CD8-positive, alpha-beta T cell (primary cell): ENCODE measurements at regions of chr6 and their contacts with region 1.

Region 1: DNA sequence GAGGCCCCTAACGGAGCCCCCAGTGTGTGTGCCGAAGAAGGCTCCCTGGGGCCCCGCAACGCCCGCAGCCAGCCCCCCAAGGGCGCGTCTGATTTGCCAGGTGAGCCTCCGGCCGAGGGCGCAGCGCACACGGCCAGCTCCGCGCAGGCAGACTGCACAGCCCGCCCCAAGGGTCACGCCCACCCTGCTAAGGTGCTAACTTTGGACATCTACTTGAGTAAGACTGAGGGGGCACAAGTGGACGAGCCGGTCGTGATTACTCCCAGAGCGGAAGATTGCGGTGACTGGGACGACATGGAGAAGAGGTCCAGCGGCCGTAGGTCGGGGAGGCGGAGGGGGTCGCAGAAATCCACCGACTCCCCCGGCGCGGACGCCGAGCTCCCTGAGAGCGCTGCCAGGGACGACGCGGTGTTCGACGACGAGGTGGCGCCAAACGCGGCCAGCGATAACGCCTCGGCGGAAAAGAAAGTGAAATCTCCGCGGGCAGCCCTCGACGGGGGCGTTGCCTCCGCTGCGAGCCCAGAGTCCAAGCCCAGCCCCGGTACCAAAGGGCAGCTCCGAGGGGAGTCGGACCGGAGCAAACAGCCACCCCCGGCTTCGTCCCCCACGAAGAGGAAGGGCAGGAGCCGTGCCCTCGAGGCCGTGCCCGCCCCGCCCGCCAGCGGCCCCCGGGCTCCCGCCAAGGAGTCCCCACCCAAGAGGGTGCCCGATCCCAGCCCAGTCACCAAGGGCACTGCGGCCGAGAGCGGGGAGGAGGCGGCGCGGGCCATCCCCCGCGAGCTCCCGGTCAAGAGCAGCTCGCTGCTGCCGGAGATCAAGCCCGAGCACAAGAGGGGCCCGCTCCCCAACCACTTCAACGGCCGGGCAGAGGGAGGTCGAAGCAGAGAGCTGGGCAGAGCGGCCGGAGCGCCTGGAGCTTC is 117.0 kb downstream of the RTN4IP1 start:
- DNase-seq: peak; percentile 55 to 91 (median 80)
- ATAC-seq: peak; percentile 61
- H3K4me3 ChIP-seq: peak overlapping the region; percentile 82 to 84
- H3K4me3 Mint-ChIP-seq: peak overlapping the region; percentile 97
- H3K27ac ChIP-seq: peak overlapping the region; percentile 85
- H3K27ac Mint-ChIP-seq: peak overlapping the region; percentile 96
- H3K4me1 ChIP-seq: peaks cover 58% of the 10 kb centered on the region
- H3K4me1 Mint-ChIP-seq: peaks cover 55% of the 10 kb centered on the region
- H3K27me3 ChIP-seq: no peaks in the 10 kb centered on the region
- H3K27me3 Mint-ChIP-seq: no peaks in the 10 kb centered on the region
- CTCF ChIP-seq: peak; percentile 59

Region 2: DNA sequence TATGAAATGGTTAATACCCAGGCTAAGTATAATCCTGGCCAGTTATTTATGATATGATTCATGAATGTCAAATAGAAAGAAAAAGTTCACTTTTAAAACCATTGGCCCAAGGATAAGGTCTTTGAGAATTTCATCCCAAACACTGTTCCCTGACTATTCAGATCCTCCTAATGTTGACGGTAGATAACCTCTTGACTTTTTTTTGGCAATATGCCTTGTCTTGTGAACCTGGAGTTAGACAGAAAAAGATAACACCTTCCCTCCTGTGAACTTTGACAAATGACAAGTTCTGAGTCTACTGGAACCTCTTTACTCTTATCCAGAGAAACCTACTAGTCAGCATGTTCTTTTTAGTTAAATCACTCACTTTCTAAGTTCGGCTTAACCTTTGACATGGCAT is 942.6 kb before region 1 on chr6:
- CTCF ChIA-PET with region 1: no interaction called
- POLR2A ChIA-PET with region 1: no interaction called
- intact Hi-C with region 1: no loop called
- DNase-seq: no peak
- ATAC-seq: no peak
- H3K4me3 ChIP-seq: no peak overlapping the region
- H3K4me3 Mint-ChIP-seq: no peak overlapping the region
- H3K27ac ChIP-seq: no peak overlapping the region
- H3K27ac Mint-ChIP-seq: no peak overlapping the region
- H3K4me1 ChIP-seq: no peaks in the 10 kb centered on the region
- H3K4me1 Mint-ChIP-seq: no peaks in the 10 kb centered on the region
- H3K27me3 ChIP-seq: no peaks in the 10 kb centered on the region
- H3K27me3 Mint-ChIP-seq: no peaks in the 10 kb centered on the region
- CTCF ChIP-seq: no peak

Region 3: GRCh38 chr6:106325336-106326178 is 186.8 kb before region 1 on chr6 and contains the start of gene ATG5:
- CTCF ChIA-PET with region 1: interaction called, 3 read pairs
- POLR2A ChIA-PET with region 1: interaction called, 3 read pairs
- intact Hi-C with region 1: loop called in 1 of 2 experiments (anchors 1 kb)
- DNase-seq: peak; percentile 99 to 100 (median 100)
- ATAC-seq: peak; percentile 91
- H3K4me3 ChIP-seq: peak within 1 kb of the TSS; percentile 94 to 96
- H3K4me3 Mint-ChIP-seq: peak within 1 kb of the TSS; percentile 99
- H3K27ac ChIP-seq: peak within 1 kb of the TSS; percentile 90
- H3K27ac Mint-ChIP-seq: peak within 1 kb of the TSS; percentile 96
- H3K4me1 ChIP-seq: peaks cover 28% of the 10 kb centered on the region
- H3K4me1 Mint-ChIP-seq: peaks cover 47% of the 10 kb centered on the region
- H3K27me3 ChIP-seq: no peaks in the 10 kb centered on the region
- H3K27me3 Mint-ChIP-seq: peaks cover 12% of the 10 kb centered on the region
- CTCF ChIP-seq: no peak
- total RNA-seq, gene ATG5: 28.7 to 28.9 TPM

Region 4: GRCh38 chr6:106444777-106445507 is 67.4 kb before region 1 on chr6:
- CTCF ChIA-PET with region 1: interaction called, 15 read pairs
- POLR2A ChIA-PET with region 1: interaction called, 3 read pairs
- intact Hi-C with region 1: loop called (anchors 1 to 2 kb)
- DNase-seq: peak in 3 of 9 experiments; percentile 32 to 84 (median 77)
- ATAC-seq: peak; percentile 86
- H3K4me3 ChIP-seq: no peak overlapping the region
- H3K4me3 Mint-ChIP-seq: no peak overlapping the region
- H3K27ac ChIP-seq: no peak overlapping the region
- H3K27ac Mint-ChIP-seq: no peak overlapping the region
- H3K4me1 ChIP-seq: peaks cover 12% of the 10 kb centered on the region
- H3K4me1 Mint-ChIP-seq: peaks cover 15% of the 10 kb centered on the region
- H3K27me3 ChIP-seq: peaks cover under 1 to 3% of the 10 kb centered on the region in 2 experiments
- H3K27me3 Mint-ChIP-seq: peaks cover 12% of the 10 kb centered on the region
- CTCF ChIP-seq: peak; percentile 72

Region 5: DNA sequence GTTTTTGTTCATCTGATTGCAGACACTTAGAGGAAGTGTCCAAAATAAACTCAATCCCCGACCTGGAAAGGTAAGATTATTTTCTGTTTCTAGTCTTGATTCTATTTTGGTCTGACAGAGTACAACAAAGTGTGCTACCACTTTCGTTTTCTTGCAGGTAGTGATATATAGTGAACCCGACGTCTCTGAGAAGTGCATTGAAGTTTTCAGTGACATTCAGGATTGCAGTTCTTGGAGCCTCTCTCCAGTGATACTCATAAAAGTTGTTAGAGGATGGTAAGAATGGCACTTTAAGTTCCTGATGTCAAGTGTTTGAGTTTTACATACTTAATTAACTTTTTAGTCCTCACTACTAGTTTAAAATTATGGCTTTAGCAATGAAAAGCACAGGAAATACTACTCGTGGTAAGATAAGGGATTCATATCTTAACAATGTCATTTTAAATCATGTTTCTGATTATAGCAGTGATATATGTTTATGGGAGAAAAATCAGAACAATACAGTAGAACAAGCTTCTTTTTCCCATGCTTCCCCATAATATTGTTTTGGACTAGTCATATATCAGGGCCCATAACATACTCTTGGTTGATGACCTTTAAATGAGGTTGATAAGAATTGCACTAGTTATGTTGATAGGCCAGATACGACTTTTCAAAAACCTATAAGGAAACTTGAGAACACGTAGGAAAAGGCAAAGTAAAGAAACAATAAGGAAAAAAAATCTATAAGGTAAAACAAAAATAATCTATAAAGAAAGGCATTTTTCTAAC is 13.0 kb after region 1 on chr6:
- CTCF ChIA-PET with region 1: interaction called, 104 read pairs
- POLR2A ChIA-PET with region 1: interaction called, 135 read pairs
- intact Hi-C with region 1: loop called (anchors 1 kb)
- DNase-seq: peak in 2 of 9 experiments; percentile 53 to 73
- ATAC-seq: peak; percentile 12
- H3K4me3 ChIP-seq: peak overlapping the region; percentile 35 to 38
- H3K4me3 Mint-ChIP-seq: peak overlapping the region; percentile 86
- H3K27ac ChIP-seq: peak overlapping the region; percentile 43 to 82
- H3K27ac Mint-ChIP-seq: peak overlapping the region; percentile 93
- H3K4me1 ChIP-seq: peaks cover 22% of the 10 kb centered on the region
- H3K4me1 Mint-ChIP-seq: peaks cover 65% of the 10 kb centered on the region
- H3K27me3 ChIP-seq: no peaks in the 10 kb centered on the region
- H3K27me3 Mint-ChIP-seq: no peaks in the 10 kb centered on the region
- CTCF ChIP-seq: no peak

Region 6: DNA sequence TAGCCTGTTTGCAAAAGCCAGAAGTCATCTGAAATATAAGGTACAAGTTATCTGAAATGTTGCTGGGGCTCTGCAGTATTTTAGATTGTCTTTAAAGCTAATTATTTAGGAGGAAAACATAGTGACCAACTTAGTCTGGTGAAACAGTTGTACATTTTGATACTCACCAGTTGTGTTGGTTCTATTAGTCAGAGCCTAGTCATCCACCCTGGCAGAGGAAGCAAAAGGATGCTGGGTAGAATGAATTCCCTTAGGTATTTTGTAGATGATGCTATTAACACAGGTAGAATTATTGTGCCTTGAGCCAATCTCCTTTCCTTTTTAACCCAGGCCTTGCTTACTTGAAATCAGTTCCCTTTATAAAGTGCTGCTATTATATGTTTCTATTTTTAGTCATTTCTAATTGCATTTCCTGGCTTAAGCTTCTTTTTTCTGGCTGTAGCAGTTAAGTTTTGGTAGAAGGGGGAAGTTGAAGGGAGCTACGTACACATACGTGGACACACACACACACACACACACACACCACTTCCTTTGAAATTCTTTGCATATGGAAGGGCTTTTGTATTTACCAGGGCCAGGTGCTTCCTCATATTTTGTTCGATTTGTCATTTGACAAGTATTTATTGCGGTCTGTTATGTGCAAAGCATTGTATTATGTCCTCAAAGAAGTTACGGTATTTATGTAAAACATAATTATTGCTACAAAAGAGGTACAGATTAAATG is 34.5 kb after region 1 on chr6:
- CTCF ChIA-PET with region 1: interaction called, 115 read pairs
- POLR2A ChIA-PET with region 1: interaction called, 3 read pairs
- intact Hi-C with region 1: no loop called
- DNase-seq: no peak
- ATAC-seq: no peak
- H3K4me3 ChIP-seq: no peak overlapping the region
- H3K4me3 Mint-ChIP-seq: no peak overlapping the region
- H3K27ac ChIP-seq: peak overlapping the region in 1 of 2 experiments; percentile 12
- H3K27ac Mint-ChIP-seq: peak overlapping the region; percentile 28
- H3K4me1 ChIP-seq: no peaks in the 10 kb centered on the region
- H3K4me1 Mint-ChIP-seq: peaks cover 25% of the 10 kb centered on the region
- H3K27me3 ChIP-seq: no peaks in the 10 kb centered on the region
- H3K27me3 Mint-ChIP-seq: no peaks in the 10 kb centered on the region
- CTCF ChIP-seq: no peak

Region 7: DNA sequence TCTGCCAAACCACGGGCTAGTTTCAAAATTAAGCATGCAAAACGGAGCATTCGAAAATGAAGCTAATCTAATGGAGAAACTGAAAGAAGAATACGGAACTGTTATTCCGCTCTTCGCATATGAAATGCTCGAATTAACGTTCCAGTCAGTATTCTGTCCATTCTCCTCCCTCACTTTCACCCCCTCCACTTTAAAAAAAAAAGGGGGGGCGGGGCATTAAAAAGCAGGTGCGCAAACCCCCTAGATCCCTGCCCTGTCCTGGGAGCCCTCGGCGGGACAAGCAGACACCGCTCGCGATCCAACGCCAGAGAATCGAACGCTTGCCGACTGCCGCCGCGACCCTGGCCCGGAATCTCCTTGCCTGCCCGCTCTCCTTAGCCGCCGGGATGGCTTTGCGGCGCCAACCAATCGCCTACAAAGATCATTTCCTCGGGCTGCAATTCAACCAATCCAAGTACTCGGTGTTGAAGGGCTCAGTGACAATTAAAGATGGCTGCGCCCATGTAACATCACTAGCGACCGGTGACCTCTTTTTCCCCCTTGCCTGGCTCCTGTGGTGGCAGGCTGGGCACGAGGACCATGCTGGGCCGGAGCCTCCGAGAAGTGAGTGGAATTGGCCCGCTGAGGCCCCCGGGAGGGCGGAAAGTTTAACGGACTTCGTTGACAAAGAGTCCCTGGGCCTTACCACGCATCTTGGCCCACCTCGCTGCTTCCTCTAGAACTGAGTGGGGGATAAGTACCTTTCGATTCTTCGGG is 117.0 kb after region 1 on chr6 and contains the starts of genes QRSL1 and RTN4IP1:
- CTCF ChIA-PET with region 1: no interaction called
- POLR2A ChIA-PET with region 1: interaction called, 3 read pairs
- intact Hi-C with region 1: loop called (anchors 5 kb)
- DNase-seq: peak; percentile 70 to 95 (median 82)
- ATAC-seq: peak; percentile 90
- H3K4me3 ChIP-seq: peak within 1 kb of the TSS; percentile 86 to 93
- H3K4me3 Mint-ChIP-seq: peak within 1 kb of the TSS; percentile 99
- H3K27ac ChIP-seq: peak within 1 kb of the TSS; percentile 83 to 88
- H3K27ac Mint-ChIP-seq: peak within 1 kb of the TSS; percentile 99
- H3K4me1 ChIP-seq: peaks cover 19% of the 10 kb centered on the region
- H3K4me1 Mint-ChIP-seq: peaks cover 43% of the 10 kb centered on the region
- H3K27me3 ChIP-seq: no peaks in the 10 kb centered on the region
- H3K27me3 Mint-ChIP-seq: no peaks in the 10 kb centered on the region
- CTCF ChIP-seq: no peak
- total RNA-seq, gene QRSL1: 11.1 to 11.6 TPM
- total RNA-seq, gene RTN4IP1: 1.8 to 1.9 TPM

Region 8: DNA sequence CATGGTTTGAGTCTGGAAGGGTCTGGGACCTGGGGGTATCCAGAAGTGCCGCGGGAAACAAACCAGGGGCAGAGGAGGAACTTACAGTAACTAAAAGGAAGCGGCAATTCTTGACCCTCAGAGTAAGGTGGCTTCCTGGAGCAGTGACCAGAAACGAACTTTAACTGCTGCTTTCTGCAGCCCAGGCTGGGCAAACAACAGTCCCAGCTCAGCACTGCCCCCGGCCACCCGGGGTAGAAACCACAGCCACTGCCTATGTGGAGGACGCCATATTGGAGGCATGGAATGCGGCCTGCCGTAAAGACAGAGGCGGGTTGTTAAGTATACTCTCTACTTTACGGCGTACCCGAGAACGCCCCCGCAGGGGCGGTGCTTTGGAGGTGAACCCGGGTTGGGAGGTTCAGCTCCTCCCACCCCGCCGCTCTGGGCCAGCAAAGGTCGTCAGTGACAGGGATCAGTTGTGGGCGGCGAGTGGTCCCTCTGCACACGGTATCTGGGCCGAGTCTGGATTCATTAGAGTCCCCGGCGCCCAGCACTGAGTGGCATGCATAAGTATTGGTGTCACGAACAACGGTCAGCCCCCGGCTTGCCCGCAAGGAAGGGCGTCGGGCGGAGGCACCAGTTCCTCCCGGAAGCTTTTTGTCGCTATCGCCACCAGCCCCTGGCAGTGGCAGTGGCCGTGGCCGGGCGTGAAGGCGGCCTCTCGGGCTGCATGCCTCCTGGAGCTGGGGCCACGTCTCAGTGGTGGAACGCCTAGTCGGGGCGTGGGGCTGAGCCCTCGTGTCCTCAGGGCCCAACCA is 947.2 kb after region 1 on chr6 and contains the start of gene PDSS2:
- CTCF ChIA-PET with region 1: no interaction called
- POLR2A ChIA-PET with region 1: no interaction called
- intact Hi-C with region 1: loop called in 1 of 2 experiments (anchors 2 kb)
- DNase-seq: peak; percentile 93 to 99 (median 96)
- ATAC-seq: peak; percentile 96
- H3K4me3 ChIP-seq: peak within 1 kb of the TSS; percentile 93 to 94
- H3K4me3 Mint-ChIP-seq: peak within 1 kb of the TSS; percentile 98
- H3K27ac ChIP-seq: peak within 1 kb of the TSS; percentile 69 to 82
- H3K27ac Mint-ChIP-seq: peak within 1 kb of the TSS; percentile 98
- H3K4me1 ChIP-seq: peaks cover 14% of the 10 kb centered on the region
- H3K4me1 Mint-ChIP-seq: peaks cover 31% of the 10 kb centered on the region
- H3K27me3 ChIP-seq: no peaks in the 10 kb centered on the region
- H3K27me3 Mint-ChIP-seq: no peaks in the 10 kb centered on the region
- CTCF ChIP-seq: peak; percentile 28
- total RNA-seq, gene PDSS2: 3.7 to 4.7 TPM